Posterior cingulate gyrus (tissue), 11 donors: ENCODE measurements at regions of chr5 and their contacts with region 1.

Region 1: GRCh38 chr5:138575194-138576015 is at the start of gene HSPA9:
- DNase-seq: peak; percentile 96 to 100 (median 97)

Region 2: GRCh38 chr5:138503487-138504270 is 71.7 kb before region 1 on chr5:
- intact Hi-C with region 1: no loop called
- DNase-seq: peak in 3 of 10 donors; percentile 41 to 50 (median 47)

Region 3: DNA sequence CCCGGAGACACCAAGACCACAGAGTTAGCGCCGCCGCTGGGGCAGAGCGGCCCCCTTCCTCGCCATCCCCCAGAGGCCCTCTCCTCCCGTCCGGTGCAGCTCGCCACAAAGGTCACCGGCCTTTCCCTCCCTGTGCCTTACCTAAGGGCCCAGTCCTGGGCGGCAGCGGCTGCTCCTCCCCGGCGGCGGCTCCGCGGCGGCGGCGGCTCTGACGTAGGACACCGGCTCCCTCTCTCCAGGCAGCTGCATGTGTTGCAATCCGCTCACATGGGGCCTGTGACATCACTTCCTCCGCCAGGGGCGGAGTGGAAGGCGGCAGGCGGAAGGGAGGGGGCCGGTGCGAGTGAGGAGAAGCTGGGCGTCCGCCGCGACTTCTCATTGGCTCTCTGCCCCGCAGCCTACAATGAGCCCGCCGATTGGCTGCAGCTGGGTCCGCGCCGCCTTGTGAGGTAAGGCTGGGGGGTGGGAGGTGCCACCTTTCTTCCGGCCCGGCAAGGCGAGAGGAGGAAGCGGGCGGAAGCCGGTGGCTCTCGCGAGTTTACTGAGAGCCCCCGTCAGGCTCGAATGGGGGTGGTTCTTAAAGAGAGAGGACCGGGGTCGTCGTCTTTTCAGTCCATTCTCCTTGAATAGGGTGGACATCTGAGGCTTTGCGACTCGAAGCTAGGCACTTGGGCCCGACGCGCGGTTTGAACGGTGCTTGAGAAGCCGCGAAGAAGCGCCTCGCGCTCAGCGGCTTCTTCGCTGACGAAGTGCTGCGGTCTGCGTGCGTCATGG is 32.3 kb before region 1 on chr5 and contains the start of gene ETF1:
- intact Hi-C with region 1: loop called (anchors 2 kb)
- DNase-seq: peak; percentile 100

Region 4: GRCh38 chr5:138632900-138633489 is 57.6 kb after region 1 on chr5:
- intact Hi-C with region 1: loop called (anchors 1 kb)
- DNase-seq: peak; percentile 55 to 95 (median 72)